Calu3 (cell line): ENCODE measurements at regions of chr2 and their contacts with region 1.

Region 1: DNA sequence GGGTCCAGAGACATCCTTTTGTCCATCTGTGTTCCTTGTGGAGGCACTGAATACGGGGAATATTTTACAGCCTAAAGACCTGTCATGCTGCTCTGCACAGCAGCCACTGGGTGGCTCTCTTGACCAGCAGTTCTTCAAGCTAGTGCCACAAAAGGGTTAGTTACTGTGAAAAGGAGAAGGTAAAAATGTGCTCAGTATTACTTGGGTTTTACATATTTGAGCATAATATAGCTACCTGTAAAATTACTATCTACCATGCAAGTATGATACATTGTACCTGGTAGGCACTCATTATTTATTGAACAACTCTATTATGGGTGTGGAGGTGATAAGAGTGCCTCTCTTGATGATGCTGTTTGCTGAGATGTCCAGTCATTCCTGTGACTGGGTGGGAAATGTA is 23.6 kb downstream of the FZD5 start:
- DNase-seq: peak; percentile 59
- H3K4me3 Mint-ChIP-seq: no peak overlapping the region
- H3K27ac Mint-ChIP-seq: no peak overlapping the region
- H3K4me1 Mint-ChIP-seq: no peaks in the 10 kb centered on the region
- H3K27me3 Mint-ChIP-seq: no peaks in the 10 kb centered on the region
- CTCF ChIP-seq: peak; percentile 75

Region 2: DNA sequence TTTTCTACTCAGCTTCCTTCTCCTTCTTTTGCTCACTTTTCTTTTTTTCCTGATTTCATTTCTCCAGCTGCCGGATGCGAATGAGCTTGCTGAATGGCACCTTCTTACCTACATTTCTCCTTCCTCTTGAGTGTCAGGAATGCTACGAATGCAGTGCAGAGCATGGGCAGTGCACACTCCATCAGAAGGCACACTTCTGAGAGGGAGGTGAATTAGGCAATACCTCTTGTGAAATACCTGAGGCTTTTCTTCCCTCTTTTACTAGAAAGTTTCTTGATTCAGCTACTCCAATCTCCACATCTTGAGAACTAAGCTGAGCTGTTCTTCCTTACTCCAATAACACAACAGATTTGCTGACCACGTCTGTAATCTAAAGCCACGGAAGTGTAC is 228.1 kb after region 1 on chr2:
- CTCF ChIA-PET with region 1: interaction called, 9 read pairs
- intact Hi-C with region 1: loop called (anchors 1 kb)
- DNase-seq: peak; percentile 4
- H3K4me3 Mint-ChIP-seq: no peak overlapping the region
- H3K27ac Mint-ChIP-seq: no peak overlapping the region
- H3K4me1 Mint-ChIP-seq: peaks cover 30% of the 10 kb centered on the region
- H3K27me3 Mint-ChIP-seq: no peaks in the 10 kb centered on the region
- CTCF ChIP-seq: no peak

Region 3: GRCh38 chr2:208033758-208034502 is 287.8 kb after region 1 on chr2:
- CTCF ChIA-PET with region 1: interaction called, 19 read pairs
- intact Hi-C with region 1: loop called (anchors 1 kb)
- DNase-seq: peak; percentile 78
- H3K4me3 Mint-ChIP-seq: no peak overlapping the region
- H3K27ac Mint-ChIP-seq: peak overlapping the region; percentile 55
- H3K4me1 Mint-ChIP-seq: peaks cover 14% of the 10 kb centered on the region
- H3K27me3 Mint-ChIP-seq: no peaks in the 10 kb centered on the region
- CTCF ChIP-seq: peak; percentile 43

Region 4: GRCh38 chr2:208040199-208041171 is 294.4 kb after region 1 on chr2:
- CTCF ChIA-PET with region 1: interaction called, 27 read pairs
- intact Hi-C with region 1: loop called (anchors 1 kb)
- DNase-seq: peak; percentile 76
- H3K4me3 Mint-ChIP-seq: no peak overlapping the region
- H3K27ac Mint-ChIP-seq: no peak overlapping the region
- H3K4me1 Mint-ChIP-seq: peaks cover 9% of the 10 kb centered on the region
- H3K27me3 Mint-ChIP-seq: no peaks in the 10 kb centered on the region
- CTCF ChIP-seq: peak; percentile 76

Region 5: DNA sequence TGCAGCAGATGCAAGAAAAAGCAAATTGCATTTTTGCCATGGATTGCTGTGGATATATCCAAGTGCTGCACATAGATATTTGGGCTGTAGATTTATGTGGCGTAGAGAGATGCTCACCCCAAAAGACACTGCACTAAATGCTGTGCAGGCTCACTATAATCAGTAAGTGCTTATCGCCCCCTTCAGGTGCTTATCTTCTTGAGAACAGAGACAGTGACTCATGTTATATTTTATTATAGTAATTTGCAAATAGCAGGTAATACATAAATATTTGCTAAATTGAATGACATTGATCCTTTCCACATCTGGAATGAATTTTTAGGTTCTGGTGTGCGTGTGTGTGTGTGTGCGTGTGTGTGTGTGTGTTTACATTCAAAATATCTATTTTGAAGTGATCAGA is 316.0 kb after region 1 on chr2:
- CTCF ChIA-PET with region 1: no interaction called
- intact Hi-C with region 1: loop called (anchors 1 kb)
- DNase-seq: peak; percentile 36
- H3K4me3 Mint-ChIP-seq: no peak overlapping the region
- H3K27ac Mint-ChIP-seq: no peak overlapping the region
- H3K4me1 Mint-ChIP-seq: peaks cover 8% of the 10 kb centered on the region
- H3K27me3 Mint-ChIP-seq: peaks cover 18% of the 10 kb centered on the region
- CTCF ChIP-seq: peak; percentile 35

Region 6: DNA sequence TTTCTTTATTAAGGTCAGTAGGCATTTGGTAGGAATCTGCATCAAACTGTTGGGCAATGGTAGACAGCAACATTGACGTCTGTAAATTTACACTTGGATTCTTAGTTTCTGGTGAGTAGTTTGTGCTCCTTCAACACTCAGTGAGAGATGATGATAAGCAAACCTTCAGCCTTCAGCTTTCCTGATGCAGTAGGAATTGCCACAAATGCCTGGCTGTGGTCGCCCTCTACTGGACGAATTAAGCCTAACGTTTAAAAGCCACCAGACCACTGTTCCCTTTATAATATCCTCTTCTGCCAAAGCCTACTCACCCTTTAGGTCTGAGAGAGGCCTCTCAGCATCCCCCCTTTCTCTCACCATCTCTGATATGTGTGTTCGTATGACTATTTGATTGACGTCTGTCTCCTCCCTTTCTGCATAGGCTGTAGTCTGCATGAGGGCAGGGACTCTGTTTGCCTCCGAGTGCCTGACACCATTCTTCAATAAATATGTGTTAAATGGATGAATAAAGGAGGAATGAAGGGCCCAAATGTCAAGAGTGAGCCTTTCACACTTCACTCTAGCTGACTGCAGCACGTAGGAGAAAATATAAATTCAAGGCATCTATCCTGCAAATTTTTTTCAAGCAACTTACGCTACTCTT is 326.2 kb after region 1 on chr2:
- CTCF ChIA-PET with region 1: interaction called, 12 read pairs
- intact Hi-C with region 1: loop called (anchors 1 kb)
- DNase-seq: peak; percentile 77
- H3K4me3 Mint-ChIP-seq: no peak overlapping the region
- H3K27ac Mint-ChIP-seq: no peak overlapping the region
- H3K4me1 Mint-ChIP-seq: no peaks in the 10 kb centered on the region
- H3K27me3 Mint-ChIP-seq: peaks cover 9% of the 10 kb centered on the region
- CTCF ChIP-seq: peak; percentile 78

Region 7: GRCh38 chr2:208437755-208438154 is 691.6 kb after region 1 on chr2:
- CTCF ChIA-PET with region 1: no interaction called
- intact Hi-C with region 1: no loop called
- DNase-seq: no peak
- H3K4me3 Mint-ChIP-seq: no peak overlapping the region
- H3K27ac Mint-ChIP-seq: no peak overlapping the region
- H3K4me1 Mint-ChIP-seq: no peaks in the 10 kb centered on the region
- H3K27me3 Mint-ChIP-seq: no peaks in the 10 kb centered on the region
- CTCF ChIP-seq: no peak